PC-9 (cell line): ENCODE measurements at regions of chr1 and their contacts with region 1.

Region 1: DNA sequence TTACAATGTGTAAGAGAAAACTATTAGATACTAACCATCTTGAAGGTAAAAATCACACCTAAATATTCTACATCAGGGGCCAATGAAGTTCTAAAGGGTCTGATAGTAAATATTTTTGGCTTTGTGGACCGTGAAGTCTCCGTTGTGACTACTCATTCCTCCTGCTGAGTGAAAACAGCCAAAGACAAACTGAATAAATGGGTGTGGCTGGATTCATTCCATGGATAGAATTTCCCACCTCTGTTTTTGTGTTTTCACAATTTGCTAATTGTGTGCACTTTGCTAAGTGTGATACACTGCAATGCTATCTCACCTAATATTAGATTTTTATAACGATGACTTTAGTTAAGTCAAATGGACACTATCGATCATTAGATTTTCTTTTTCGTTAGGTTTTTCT is 1474.0 kb downstream of the PLA2G4A start:
- DNase-seq: no peak
- H3K4me3 ChIP-seq: no peak overlapping the region
- H3K27ac ChIP-seq: no peak overlapping the region
- H3K4me1 ChIP-seq: no peaks in the 10 kb centered on the region
- H3K27me3 ChIP-seq: no peaks in the 10 kb centered on the region
- CTCF ChIP-seq: no peak

Region 2: DNA sequence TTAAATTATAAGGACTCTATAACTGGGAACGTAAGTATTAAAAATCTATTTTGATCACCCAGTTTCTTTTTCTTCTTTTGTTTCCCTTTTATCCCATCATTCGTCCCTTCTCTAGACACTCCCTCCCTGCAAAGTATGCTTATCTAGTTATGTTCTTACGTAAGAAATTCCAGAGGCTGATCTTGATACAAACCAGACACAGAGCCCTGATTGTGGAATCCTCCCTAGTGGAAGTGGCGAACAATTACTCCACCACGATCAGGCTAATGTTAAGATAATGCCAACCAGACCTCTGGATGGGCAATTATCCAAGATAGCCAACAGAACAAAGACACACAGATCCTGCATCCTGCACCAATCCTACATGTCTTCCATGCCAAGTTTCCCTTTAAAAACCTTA is 83.4 kb after region 1 on chr1:
- CTCF ChIA-PET with region 1: no interaction called
- POLR2A ChIA-PET with region 1: interaction called, 14 read pairs
- intact Hi-C with region 1: no loop called
- DNase-seq: no peak
- H3K4me3 ChIP-seq: no peak overlapping the region
- H3K27ac ChIP-seq: no peak overlapping the region
- H3K4me1 ChIP-seq: no peaks in the 10 kb centered on the region
- H3K27me3 ChIP-seq: no peaks in the 10 kb centered on the region
- CTCF ChIP-seq: no peak

Region 3: GRCh38 chr1:188822248-188822647 is 519.5 kb after region 1 on chr1:
- CTCF ChIA-PET with region 1: no interaction called
- POLR2A ChIA-PET with region 1: interaction called, 10 read pairs
- intact Hi-C with region 1: no loop called
- DNase-seq: no peak
- H3K4me3 ChIP-seq: no peak overlapping the region
- H3K27ac ChIP-seq: no peak overlapping the region
- H3K4me1 ChIP-seq: no peaks in the 10 kb centered on the region
- H3K27me3 ChIP-seq: no peaks in the 10 kb centered on the region
- CTCF ChIP-seq: no peak